Gastrocnemius medialis (tissue), 4 donors: ENCODE measurements at regions of chr16 and their contacts with region 1.

Region 1: GRCh38 chr16:12356618-12357355 is 380.3 kb downstream of the SNX29 start:
- DNase-seq: no peak
- ATAC-seq: no peak
- H3K4me3 ChIP-seq: no peak overlapping the region
- H3K27ac ChIP-seq: no peak overlapping the region
- H3K4me1 ChIP-seq: peaks cover 0 to 4% of the 10 kb centered on the region in 2 donors
- H3K27me3 ChIP-seq: no peaks in the 10 kb centered on the region
- CTCF ChIP-seq: no peak
- POLR2A ChIP-seq: no peak

Region 2: GRCh38 chr16:12416131-12416839 is 59.5 kb after region 1 on chr16:
- in situ Hi-C with region 1: loop called in 1 of 4 experiments (anchors 10 kb)
- intact Hi-C with region 1: no loop called
- DNase-seq: no peak
- ATAC-seq: no peak
- H3K4me3 ChIP-seq: no peak overlapping the region
- H3K27ac ChIP-seq: no peak overlapping the region
- H3K4me1 ChIP-seq: no peaks in the 10 kb centered on the region
- H3K27me3 ChIP-seq: no peaks in the 10 kb centered on the region
- CTCF ChIP-seq: no peak
- POLR2A ChIP-seq: no peak

Region 3: GRCh38 chr16:12602811-12603698 is 246.3 kb after region 1 on chr16:
- in situ Hi-C with region 1: no loop called
- intact Hi-C with region 1: no loop called
- DNase-seq: no peak
- ATAC-seq: no peak
- H3K4me3 ChIP-seq: no peak overlapping the region
- H3K27ac ChIP-seq: no peak overlapping the region
- H3K4me1 ChIP-seq: no peaks in the 10 kb centered on the region
- H3K27me3 ChIP-seq: no peaks in the 10 kb centered on the region
- CTCF ChIP-seq: no peak
- POLR2A ChIP-seq: no peak